ENCODE measurements at regions of chr4 and their contacts with region 1.

Region 1: DNA sequence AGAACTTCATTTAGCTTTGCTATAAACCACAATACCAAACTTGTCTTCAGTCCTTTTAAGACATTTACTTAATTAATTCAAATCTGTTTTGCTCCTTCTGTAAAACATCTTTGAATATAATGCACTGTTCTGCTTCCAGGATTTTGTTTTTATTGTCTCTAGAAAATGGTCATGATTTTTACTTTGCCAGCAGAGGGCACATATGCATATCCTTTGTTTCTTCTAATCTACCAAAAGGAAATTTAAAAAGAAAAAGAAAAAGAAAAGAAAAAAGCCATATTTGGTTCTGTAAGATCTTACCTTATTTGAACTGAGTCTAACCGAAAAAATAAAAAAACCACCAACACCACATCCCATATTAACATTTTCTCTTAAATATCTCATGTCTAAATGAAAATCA is 101.9 kb upstream of the CCSER1 start:
- DNase-seq: no peak
- H3K4me3 ChIP-seq: no peak overlapping the region
- H3K27ac ChIP-seq: no peak overlapping the region
- H3K4me1 ChIP-seq: peaks cover 0 to 34% (median 12%) of the 10 kb centered on the region in 6 donors
- H3K27me3 ChIP-seq: no peaks in the 10 kb centered on the region
- CTCF ChIP-seq: peak in 2 of 11 experiments; percentile 13 to 24
- POLR2A ChIP-seq: no peak

Region 2: DNA sequence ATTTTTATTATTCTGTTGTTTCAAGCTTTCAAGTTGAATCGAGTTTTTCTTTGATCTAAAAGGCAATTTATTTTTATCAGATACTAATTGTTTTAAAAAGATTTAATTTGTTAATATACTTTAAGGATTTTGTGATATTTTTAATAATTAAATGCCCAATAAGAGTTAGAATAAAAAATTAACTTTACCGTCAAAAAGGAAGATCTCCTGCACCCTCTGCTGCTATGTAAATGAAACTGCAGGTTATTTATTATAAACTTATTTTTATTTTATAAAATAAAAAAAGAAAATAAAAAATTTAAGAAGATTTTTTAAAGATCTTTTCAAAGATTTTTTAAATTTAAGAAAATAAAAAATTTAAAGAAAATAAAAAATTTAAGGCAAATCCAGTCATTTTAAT is 268.1 kb after region 1 on chr4:
- intact Hi-C with region 1: loop called (anchors 5 kb)
- DNase-seq: no peak
- H3K4me3 ChIP-seq: no peak overlapping the region
- H3K27ac ChIP-seq: no peak overlapping the region
- H3K4me1 ChIP-seq: peaks cover 0 to 5% (median 0%) of the 10 kb centered on the region in 6 donors
- H3K27me3 ChIP-seq: no peaks in the 10 kb centered on the region
- CTCF ChIP-seq: peak in 4 of 11 experiments; percentile 19 to 46 (median 34)
- POLR2A ChIP-seq: no peak